ENCODE measurements at regions of chr20 and their contacts with region 1.

Region 1: DNA sequence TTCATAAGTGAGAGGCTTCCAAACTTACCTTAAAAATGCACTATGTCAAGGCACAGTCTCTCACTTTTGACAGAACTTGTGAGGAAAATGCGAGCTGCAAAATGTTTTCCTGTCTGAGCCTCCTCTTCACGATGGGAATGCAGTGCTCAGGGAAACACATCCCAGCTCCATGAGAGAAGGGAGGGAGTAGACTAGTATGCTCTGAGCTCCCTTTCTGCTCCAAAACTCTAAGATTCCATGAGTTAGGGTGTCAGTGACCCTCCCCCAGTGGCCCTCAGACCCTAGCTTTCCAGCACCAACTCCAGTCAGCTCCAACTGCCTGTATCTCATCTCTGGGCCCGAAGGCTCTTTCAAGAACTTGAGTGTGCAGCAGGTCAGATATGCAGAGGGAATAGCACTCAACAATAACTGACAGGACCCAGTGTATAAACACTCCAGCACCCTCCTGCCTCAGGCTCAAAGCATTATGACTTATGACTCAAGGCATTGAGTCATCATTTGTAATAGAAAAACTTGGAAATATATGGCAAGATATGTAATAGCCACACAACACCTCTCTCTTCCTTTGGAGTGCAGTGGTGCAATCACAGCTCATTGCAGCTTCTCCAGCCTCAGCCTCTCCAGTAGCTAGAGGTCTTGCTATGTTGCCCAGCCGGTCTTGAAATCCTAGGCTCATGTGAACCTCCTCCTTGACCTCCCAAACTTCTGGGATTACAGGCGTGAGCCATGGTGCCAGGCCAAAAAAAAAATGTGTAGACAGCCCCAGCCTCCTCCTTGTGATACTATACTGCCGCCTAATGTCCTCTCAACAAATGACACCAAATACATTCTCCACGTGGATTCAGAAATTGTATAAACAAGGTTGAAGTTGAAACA is 16.7 kb upstream of the ENTPD6 start:
- DNase-seq: peak in 1 of 10 donors; percentile 77

Region 2: GRCh38 chr20:25057234-25058050 is 121.4 kb before region 1 on chr20:
- intact Hi-C with region 1: loop called (anchors 5 kb)
- DNase-seq: peak; percentile 59 to 95 (median 70)

Region 3: GRCh38 chr20:25076731-25077609 is 101.8 kb before region 1 on chr20:
- intact Hi-C with region 1: loop called (anchors 5 kb)
- DNase-seq: peak in 2 of 10 donors; percentile 42 to 52